OCI-LY7 (cell line): ENCODE measurements at regions of chr14 and their contacts with region 1.

Region 1: GRCh38 chr14:62081012-62081612 is 318.9 kb downstream of the SNAPC1 start:
- DNase-seq: peak; percentile 90
- H3K4me3 ChIP-seq: peak overlapping the region; percentile 53
- H3K27ac ChIP-seq: peak overlapping the region; percentile 88
- H3K4me1 ChIP-seq: peaks cover 69% of the 10 kb centered on the region
- CTCF ChIP-seq: no peak

Region 2: GRCh38 chr14:61662437-61663311 is 418.4 kb before region 1 on chr14:
- CTCF ChIA-PET with region 1: no interaction called
- POLR2A ChIA-PET with region 1: no interaction called
- intact Hi-C with region 1: no loop called
- DNase-seq: peak; percentile 81
- H3K4me3 ChIP-seq: no peak overlapping the region
- H3K27ac ChIP-seq: no peak overlapping the region
- H3K4me1 ChIP-seq: peaks cover 39% of the 10 kb centered on the region
- CTCF ChIP-seq: no peak

Region 3: DNA sequence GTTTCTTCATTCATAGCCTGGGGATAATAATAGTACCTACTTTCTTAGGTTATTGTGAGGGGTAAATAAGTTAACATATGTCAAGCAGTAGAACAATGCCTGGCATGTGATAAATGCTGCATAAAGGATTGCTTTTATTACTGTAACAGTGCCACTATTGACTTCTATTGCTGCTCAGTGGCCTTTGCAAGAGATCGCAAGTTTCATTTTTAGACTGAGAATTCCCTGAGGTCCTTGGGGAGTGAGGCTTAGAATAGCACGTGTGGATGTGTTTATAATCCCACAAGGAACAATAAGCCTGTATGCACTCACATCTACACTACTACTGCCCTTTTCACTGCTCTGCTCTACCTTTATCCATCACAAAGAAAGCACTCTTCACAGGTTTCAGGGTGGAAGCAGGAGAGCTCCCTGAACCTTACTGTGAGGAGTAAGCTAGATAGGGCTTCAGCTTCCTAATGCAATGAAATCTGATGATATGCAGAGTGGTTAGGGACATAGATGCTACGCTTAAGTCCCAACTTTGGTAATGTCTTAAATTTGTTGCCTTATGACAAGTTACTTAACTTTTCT is 16.3 kb before region 1 on chr14:
- CTCF ChIA-PET with region 1: interaction called, 6 read pairs
- POLR2A ChIA-PET with region 1: interaction called, 29 read pairs
- intact Hi-C with region 1: no loop called
- DNase-seq: no peak
- H3K4me3 ChIP-seq: no peak overlapping the region
- H3K27ac ChIP-seq: no peak overlapping the region
- H3K4me1 ChIP-seq: peaks cover 20% of the 10 kb centered on the region
- CTCF ChIP-seq: no peak

Region 4: GRCh38 chr14:62071039-62071438 is 10.1 kb before region 1 on chr14:
- CTCF ChIA-PET with region 1: interaction called, 6 read pairs
- POLR2A ChIA-PET with region 1: interaction called, 29 read pairs
- intact Hi-C with region 1: no loop called
- DNase-seq: no peak
- H3K4me3 ChIP-seq: no peak overlapping the region
- H3K27ac ChIP-seq: no peak overlapping the region
- H3K4me1 ChIP-seq: no peaks in the 10 kb centered on the region
- CTCF ChIP-seq: no peak

Region 5: GRCh38 chr14:62097072-62097471 is 16.0 kb after region 1 on chr14:
- CTCF ChIA-PET with region 1: interaction called, 3 read pairs
- POLR2A ChIA-PET with region 1: interaction called, 10 read pairs
- intact Hi-C with region 1: no loop called
- DNase-seq: no peak
- H3K4me3 ChIP-seq: no peak overlapping the region
- H3K27ac ChIP-seq: no peak overlapping the region
- H3K4me1 ChIP-seq: no peaks in the 10 kb centered on the region
- CTCF ChIP-seq: no peak

Region 6: GRCh38 chr14:62117010-62117750 is 36.1 kb after region 1 on chr14:
- CTCF ChIA-PET with region 1: interaction called, 4 read pairs
- POLR2A ChIA-PET with region 1: interaction called, 28 read pairs
- intact Hi-C with region 1: loop called (anchors 2 kb)
- DNase-seq: peak; percentile 74
- H3K4me3 ChIP-seq: peak overlapping the region; percentile 51
- H3K27ac ChIP-seq: no peak overlapping the region
- H3K4me1 ChIP-seq: peaks cover 3% of the 10 kb centered on the region
- CTCF ChIP-seq: peak; percentile 66